ENCODE measurements at regions of chr6 and their contacts with region 1.

Region 1: GRCh38 chr6:63926950-63927927 is 291.6 kb downstream of the PHF3 start:
- DNase-seq: no peak

Region 2: DNA sequence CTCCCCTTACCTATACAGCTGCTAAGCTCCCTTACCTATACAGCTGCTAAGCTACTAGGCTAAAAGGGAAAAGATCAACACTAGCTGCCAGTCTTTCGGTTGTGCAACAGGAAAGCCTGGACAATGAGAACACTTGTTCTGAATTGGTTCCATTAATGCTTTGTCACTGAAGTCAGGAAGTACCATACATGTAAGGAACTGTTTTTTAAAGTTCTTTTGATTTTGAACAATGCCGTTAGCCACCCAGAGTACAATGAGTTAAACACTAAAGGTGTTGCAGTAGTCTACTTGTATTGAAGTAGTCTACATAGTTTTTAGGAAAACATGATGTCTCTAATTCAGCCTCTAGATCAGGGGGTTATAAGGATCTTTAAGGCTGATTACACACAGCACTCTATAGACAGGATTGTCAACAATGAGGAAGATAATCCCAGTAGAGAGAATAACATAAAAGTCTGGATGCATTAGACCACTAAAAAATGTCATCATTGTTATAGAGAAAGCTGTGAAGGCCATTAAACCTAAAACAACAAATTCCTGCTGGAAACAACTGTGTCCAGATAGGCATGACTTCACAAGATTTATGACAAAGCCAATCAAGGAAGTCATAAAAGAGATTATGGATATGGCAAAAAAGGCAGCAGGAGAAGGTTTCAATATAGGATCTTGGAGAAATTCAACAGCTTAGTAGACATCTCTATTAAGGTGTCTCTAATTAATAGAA is 14.7 kb after region 1 on chr6:
- intact Hi-C with region 1: loop called in 1 of 2 experiments (anchors 1 kb)
- DNase-seq: no peak

Measured in posterior vena cava (tissue), 2 donors.